ENCODE measurements at regions of chr7 and their contacts with region 1.

Region 1: DNA sequence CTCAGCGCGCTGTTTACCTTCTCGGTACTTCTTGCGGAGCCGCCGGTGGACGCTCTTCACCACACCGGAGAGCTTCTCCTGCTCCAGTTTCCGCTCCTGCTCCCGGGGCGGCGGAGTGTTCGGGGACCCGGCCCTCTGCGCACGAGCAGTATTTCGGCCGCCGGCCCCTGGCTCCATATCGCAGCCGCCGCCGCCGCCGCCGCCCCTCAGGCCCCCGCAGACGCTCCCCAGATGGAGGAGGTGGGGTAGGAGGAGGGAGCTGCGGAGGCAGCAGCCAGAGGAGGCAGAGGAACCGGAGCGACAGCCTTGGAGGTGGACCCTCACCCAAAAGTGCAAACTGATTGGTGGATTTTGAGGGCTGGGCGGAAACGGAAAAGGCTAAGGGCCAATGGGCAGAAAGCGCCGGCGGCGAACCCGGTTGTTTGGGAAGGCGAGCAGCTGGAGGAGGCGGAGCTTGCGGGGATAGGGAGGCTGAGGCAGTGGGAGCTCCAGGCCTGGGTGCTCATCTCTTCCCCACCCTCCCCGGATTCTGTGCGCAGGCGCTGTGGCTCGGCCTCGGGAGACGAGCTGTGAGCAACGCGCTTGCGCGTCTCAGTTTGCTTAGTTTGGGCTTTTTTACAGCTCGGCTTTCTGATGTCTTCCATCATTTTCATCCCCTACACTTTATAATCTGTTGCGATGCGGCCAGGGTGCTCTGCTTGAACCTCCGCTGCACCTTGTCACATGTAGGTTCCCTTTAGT is 146.9 kb downstream of the GPR85 start:
- DNase-seq: peak; percentile 99 to 100 (median 100)

Region 2: GRCh38 chr7:112789817-112790585 is 149.7 kb before region 1 on chr7 and contains the start of gene TMEM168:
- intact Hi-C with region 1: loop called (anchors 5 kb)
- DNase-seq: peak; percentile 62 to 94 (median 76)

Region 3: GRCh38 chr7:113118074-113118959 is 178.6 kb after region 1 on chr7 and contains the start of gene SMIM30:
- intact Hi-C with region 1: loop called (anchors 10 kb)
- DNase-seq: peak; percentile 86 to 99 (median 92)

Region 4: DNA sequence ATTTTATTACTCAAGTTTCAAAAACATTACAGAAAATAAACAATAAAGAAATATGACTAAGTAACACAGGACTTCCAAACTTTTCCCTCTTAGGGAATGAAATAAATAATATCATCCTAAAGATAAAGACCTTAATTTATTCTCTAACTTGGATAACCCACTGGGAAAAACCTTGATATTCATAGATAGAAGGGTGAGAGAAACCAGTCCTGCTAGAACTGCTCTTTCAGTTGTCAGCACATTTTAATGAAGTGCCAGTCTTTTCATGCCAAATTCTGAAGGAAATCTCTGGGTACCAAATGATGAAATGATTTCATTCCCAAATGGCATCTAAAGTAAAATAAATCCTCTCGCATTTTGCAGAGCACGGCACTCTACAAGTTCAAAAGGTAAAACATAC is 293.1 kb after region 1 on chr7:
- intact Hi-C with region 1: no loop called
- DNase-seq: no peak

Region 5: DNA sequence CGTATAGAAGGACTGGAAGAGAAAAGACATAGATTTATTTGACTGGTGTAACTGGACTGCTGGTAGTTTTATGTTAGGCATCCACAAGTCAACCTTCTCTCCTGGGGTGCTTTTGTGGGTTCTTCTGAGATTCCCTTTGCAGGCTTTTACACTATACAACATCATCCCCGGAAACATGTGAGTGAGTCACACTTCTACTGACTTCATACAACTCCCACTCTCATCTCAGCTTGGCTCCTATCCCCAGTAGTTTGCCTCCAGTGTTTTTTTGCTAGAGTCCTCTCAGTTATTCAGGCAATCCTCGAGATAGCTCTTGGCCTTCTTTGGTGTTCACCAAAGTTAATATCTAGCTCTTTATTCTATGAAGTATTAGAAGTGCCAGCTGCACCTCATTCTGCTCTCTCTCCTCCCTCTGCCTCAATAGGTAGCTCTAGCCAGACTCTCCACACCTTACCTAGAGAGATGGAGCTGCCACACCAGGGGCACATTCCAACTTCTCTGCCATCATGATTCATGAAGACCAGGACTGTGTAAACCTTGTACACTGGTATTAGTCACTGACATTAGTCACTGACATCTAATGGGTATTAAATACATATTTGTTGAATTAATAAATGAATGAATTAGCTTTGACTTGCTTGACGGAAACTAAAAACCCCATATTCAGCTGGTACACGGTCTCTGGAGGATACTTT is 697.1 kb after region 1 on chr7:
- intact Hi-C with region 1: no loop called
- DNase-seq: peak in 1 of 10 donors; percentile 25

Measured in posterior cingulate gyrus (tissue), 11 donors.